Breast epithelium (tissue), 4 donors: ENCODE measurements at regions of chr16 and their contacts with region 1.

Region 1: DNA sequence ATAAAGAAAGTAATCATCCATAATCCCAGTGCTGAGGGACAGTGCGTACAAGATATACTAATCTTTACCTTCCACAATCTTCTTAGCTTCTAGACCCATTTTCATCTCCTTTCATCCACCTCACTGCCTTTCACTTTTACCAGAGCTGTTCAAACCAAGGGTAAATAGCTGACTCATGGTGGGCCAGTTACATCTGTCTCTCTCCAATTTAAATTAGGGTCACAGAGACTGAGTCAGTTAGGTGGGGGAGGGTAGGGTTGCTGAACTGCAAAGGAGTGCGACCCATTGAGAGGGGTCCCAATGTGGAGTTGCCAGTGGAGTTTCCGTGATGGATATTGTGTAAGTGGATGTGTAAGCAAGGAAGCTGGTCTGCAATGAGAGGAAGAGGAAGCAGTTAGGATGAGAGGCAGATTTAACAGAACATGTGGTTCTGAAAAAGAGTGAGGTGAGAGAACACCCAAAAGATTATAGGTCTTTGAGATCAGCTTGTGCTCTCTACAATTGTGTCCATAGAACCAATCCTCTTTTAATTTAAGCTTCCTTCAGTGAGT is 83.5 kb downstream of the GP2 start:
- DNase-seq: no peak
- H3K4me3 ChIP-seq: no peak overlapping the region
- H3K27ac ChIP-seq: no peak overlapping the region
- H3K4me1 ChIP-seq: no peaks in the 10 kb centered on the region
- H3K27me3 ChIP-seq: peaks cover 0 to 6% of the 10 kb centered on the region in 2 donors
- CTCF ChIP-seq: no peak
- POLR2A ChIP-seq: no peak

Region 2: DNA sequence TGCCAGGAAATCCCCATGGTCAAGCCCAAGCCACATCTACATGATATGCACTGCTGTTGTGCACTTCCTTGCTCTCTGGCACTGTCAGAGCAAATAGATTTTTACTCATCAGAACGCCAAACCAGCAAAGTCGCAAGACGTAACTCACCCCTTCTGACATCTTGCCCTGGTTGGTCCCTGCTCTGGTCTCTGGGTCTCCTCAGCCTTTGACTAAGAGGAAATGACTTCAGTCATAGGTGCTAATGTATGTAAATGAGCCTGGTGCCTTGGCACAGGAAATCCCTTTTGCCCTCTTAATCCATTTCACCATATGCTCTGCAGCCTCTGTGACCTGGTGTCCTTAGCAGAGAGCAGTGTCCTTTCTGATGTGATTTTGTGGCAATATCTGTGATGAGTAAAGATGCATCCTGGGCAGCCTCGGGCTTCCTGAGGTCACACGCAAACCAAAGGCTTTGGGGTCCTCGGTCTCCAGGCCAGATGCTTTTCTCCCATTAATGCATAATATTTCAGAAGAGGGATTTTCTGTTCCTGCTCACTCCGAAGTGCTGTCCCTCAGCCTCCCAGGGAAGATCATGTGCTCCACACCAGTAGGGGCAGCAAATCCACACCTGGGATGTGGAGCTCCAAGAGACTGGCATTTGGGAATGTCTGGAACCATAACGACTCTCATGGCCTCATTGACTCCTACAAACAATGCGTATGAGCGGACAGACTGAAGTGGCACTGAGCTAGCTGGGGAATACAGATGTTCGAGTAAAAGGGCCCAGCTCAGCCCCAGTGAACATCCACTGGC is 16.6 kb after region 1 on chr16:
- intact Hi-C with region 1: loop called (anchors 1 kb)
- DNase-seq: no peak
- H3K4me3 ChIP-seq: no peak overlapping the region
- H3K27ac ChIP-seq: no peak overlapping the region
- H3K4me1 ChIP-seq: no peaks in the 10 kb centered on the region
- H3K27me3 ChIP-seq: no peaks in the 10 kb centered on the region
- CTCF ChIP-seq: no peak
- POLR2A ChIP-seq: no peak

Region 3: DNA sequence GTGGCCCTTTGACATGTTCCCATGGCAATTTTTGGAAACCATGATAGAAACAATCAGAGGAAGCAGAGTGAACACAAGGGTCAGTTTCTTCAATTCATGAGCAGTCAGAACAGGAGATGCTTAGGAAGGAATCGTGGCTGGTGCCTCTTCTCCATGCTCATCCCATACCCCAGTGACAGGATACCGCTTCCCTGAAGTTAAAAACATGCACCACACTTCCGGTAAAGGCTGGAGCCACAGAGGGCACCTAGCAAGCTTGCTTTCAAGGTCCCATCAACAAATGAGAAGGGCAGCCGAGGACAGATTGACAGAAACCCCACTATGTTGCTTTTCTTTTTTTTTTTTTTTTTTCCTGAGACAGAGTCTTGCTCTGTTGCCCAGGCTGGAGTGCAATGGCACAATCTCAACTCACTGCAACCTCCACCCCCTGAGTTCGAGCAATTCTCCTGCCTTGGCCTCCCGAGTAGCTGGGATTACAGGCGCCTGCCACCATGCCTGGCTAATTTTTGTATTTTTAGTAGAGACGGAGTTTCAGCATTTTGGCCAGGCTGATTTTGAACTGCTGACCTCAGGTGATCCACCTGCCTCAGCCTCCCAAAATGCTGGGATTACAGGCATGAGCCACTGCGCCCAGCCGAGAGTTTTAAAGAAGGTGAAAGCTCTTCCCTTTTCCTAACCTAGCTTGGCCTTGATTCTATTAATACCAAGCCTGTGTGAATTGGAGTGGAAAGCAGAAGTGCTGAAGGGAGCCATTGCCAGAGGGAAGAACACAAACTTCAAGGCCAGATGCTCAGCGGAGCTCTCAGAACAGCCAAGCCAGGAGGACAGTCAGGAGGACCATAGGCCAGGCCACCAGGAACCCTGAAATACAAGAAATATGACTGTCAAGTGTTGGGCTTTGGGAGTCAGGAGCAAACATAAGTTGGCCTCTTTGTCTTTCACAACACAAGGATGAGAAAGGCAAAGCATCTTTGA is 66.9 kb after region 1 on chr16:
- intact Hi-C with region 1: no loop called
- DNase-seq: no peak
- H3K4me3 ChIP-seq: no peak overlapping the region
- H3K27ac ChIP-seq: no peak overlapping the region
- H3K4me1 ChIP-seq: no peaks in the 10 kb centered on the region
- H3K27me3 ChIP-seq: no peaks in the 10 kb centered on the region
- CTCF ChIP-seq: no peak
- POLR2A ChIP-seq: no peak